PC-3 (cell line): ENCODE measurements at regions of chr5 and their contacts with region 1.

Region 1: DNA sequence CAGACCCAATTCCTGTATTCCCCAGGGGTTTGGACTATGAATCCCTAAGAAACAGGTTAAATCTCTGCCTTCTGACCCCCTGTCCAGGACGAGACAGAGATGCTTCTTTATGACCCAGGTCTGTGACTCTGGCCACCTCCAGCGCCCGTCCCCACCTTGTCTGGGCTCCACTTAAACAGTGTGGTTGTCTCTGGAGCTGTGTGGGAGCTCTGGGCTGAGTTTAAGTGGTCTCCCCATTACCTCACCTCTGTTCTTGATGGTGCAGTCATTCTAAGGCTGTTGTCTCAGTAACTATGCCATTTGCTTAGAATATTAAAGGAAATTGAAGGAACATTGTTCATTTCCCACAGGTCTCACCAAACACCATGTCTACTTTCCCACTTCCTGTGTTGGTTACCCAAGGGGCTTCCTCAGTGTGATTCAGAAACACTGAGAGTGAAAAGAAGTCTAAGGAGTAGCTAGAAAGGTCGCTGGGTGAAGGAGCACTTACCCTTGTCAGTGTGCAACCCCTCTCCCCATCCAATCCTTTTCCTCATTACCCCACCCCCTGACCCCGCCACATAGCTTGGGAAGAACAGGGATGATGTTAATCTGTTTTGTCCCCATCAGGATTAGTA is 127.8 kb upstream of the CKMT2 start:
- DNase-seq: no peak
- ATAC-seq: no peak
- H3K4me3 ChIP-seq: no peak overlapping the region
- H3K27ac ChIP-seq: no peak overlapping the region
- H3K4me1 ChIP-seq: no peaks in the 10 kb centered on the region
- H3K27me3 ChIP-seq: peaks cover 8% of the 10 kb centered on the region; the same call in 1 of the 2 replicates
- CTCF ChIP-seq: no peak

Region 2: GRCh38 chr5:80935811-80936385 is 169.5 kb before region 1 on chr5:
- CTCF ChIA-PET with region 1: interaction called, 3 read pairs
- POLR2A ChIA-PET with region 1: no interaction called
- intact Hi-C with region 1: loop called (anchors 10 kb)
- DNase-seq: peak; percentile 18
- ATAC-seq: peak; percentile 27; the same call in 1 of the 2 replicates
- H3K4me3 ChIP-seq: no peak overlapping the region
- H3K27ac ChIP-seq: no peak overlapping the region
- H3K4me1 ChIP-seq: peaks cover 7% of the 10 kb centered on the region; the same call in 1 of the 2 replicates
- H3K27me3 ChIP-seq: no peaks in the 10 kb centered on the region
- CTCF ChIP-seq: peak; percentile 28; the same call in 1 of the 2 replicates

Region 3: DNA sequence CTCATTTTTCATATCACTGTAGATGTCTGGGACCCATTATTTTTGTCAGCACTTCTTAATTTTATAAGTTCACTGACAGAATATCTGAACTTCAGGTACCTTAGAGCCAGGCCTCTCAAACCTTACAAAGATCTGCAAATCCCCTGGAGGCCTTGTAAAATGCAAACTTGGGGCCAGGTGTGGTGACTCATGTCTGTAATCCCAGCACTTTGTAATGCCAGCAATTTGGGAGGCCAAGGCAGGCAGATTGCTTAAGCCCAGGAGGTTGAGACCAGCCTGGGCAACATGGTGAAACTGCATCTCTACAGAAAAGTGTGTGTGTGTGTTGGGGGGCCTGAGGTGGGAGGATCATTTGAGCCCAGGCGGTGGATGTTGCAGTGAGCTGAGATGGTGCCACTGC is 114.4 kb before region 1 on chr5:
- CTCF ChIA-PET with region 1: no interaction called
- POLR2A ChIA-PET with region 1: no interaction called
- intact Hi-C with region 1: no loop called
- DNase-seq: peak; percentile 83
- ATAC-seq: peak; percentile 87
- H3K4me3 ChIP-seq: no peak overlapping the region
- H3K27ac ChIP-seq: peak overlapping the region; percentile 71
- H3K4me1 ChIP-seq: peaks cover 24% of the 10 kb centered on the region
- H3K27me3 ChIP-seq: no peaks in the 10 kb centered on the region
- CTCF ChIP-seq: no peak

Region 4: GRCh38 chr5:81045389-81045807 is 60.0 kb before region 1 on chr5:
- CTCF ChIA-PET with region 1: no interaction called
- POLR2A ChIA-PET with region 1: no interaction called
- intact Hi-C with region 1: loop called (anchors 2 kb)
- DNase-seq: no peak
- ATAC-seq: no peak
- H3K4me3 ChIP-seq: no peak overlapping the region
- H3K27ac ChIP-seq: no peak overlapping the region
- H3K4me1 ChIP-seq: no peaks in the 10 kb centered on the region
- H3K27me3 ChIP-seq: 0 out of 2 replicates have a peak, but pooled peaks cover 4% of the 10 kb centered on the region
- CTCF ChIP-seq: no peak